ENCODE measurements at regions of chr11 and their contacts with region 1.

Region 1: GRCh38 chr11:112074026-112074811 is at the start of gene NKAPD1:
- DNase-seq: peak; percentile 75
- H3K4me3 Mint-ChIP-seq: peak within 1 kb of the TSS; percentile 94
- H3K27ac Mint-ChIP-seq: peak within 1 kb of the TSS; percentile 92
- H3K4me1 Mint-ChIP-seq: peaks cover 23% of the 10 kb centered on the region
- H3K27me3 Mint-ChIP-seq: peaks cover 8% of the 10 kb centered on the region
- total RNA-seq, gene NKAPD1: 24.6 and 25.0 TPM in 2 replicates

Region 2: DNA sequence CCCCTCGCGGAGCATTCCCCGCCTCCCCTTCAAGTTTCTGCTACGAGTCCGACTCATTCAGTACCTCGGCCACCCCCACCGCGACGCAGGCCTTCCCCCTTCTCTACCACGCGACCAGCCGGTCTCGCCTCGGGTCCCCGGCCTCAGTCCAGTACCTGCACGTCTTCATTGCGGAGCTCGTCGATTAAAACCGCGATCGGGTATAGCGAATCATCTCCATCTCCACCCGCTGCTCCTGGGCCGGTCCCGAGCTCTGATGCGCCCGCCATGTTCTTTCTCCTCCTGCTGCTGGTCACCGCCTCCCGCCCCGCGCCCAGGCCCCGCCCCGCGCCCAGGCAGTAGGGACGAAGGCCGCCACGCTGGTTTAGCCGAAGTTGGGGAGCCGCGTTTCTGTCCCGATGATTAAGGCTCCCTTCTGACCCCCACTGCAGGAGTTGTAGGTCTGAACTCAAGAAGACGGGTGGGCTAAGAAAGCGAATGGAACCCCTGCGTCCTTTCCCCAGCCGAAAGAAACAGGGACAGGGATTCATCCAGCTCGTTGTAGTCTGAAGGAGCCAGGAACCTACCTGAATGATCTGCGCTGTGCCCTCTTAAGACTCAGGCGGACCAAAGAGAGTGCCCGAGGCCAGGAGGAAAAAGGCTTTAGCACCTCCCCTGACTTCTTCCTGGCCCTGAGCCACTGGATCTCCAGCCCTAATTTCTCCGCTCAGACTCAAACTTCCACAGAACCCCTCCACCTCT is 308.0 kb before region 1 on chr11 and contains the start of gene PPP2R1B:
- intact Hi-C with region 1: loop called (anchors 5 kb)
- DNase-seq: peak; percentile 66
- H3K4me3 Mint-ChIP-seq: peak within 1 kb of the TSS; percentile 98
- H3K27ac Mint-ChIP-seq: peak within 1 kb of the TSS; percentile 98
- H3K4me1 Mint-ChIP-seq: peaks cover 26% of the 10 kb centered on the region
- H3K27me3 Mint-ChIP-seq: no peaks in the 10 kb centered on the region
- total RNA-seq, gene PPP2R1B: 57.7 and 64.2 TPM in 2 replicates

Region 3: GRCh38 chr11:111878849-111879636 is 195.2 kb before region 1 on chr11 and contains the starts of genes CFAP68 and FDXACB1:
- intact Hi-C with region 1: loop called (anchors 5 kb)
- DNase-seq: peak; percentile 94
- H3K4me3 Mint-ChIP-seq: peak within 1 kb of the TSS; percentile 96
- H3K27ac Mint-ChIP-seq: peak within 1 kb of the TSS; percentile 100
- H3K4me1 Mint-ChIP-seq: peaks cover 13% of the 10 kb centered on the region
- H3K27me3 Mint-ChIP-seq: no peaks in the 10 kb centered on the region
- total RNA-seq, gene CFAP68: 19.4 and 22.2 TPM in 2 replicates
- total RNA-seq, gene FDXACB1: 7.4 and 8.2 TPM in 2 replicates

Region 4: GRCh38 chr11:111938687-111939160 is 135.5 kb before region 1 on chr11:
- intact Hi-C with region 1: loop called (anchors 5 kb)
- DNase-seq: no peak
- H3K4me3 Mint-ChIP-seq: peak overlapping the region; percentile 89
- H3K27ac Mint-ChIP-seq: peak overlapping the region; percentile 95
- H3K4me1 Mint-ChIP-seq: peaks cover 60% of the 10 kb centered on the region
- H3K27me3 Mint-ChIP-seq: no peaks in the 10 kb centered on the region

Region 5: DNA sequence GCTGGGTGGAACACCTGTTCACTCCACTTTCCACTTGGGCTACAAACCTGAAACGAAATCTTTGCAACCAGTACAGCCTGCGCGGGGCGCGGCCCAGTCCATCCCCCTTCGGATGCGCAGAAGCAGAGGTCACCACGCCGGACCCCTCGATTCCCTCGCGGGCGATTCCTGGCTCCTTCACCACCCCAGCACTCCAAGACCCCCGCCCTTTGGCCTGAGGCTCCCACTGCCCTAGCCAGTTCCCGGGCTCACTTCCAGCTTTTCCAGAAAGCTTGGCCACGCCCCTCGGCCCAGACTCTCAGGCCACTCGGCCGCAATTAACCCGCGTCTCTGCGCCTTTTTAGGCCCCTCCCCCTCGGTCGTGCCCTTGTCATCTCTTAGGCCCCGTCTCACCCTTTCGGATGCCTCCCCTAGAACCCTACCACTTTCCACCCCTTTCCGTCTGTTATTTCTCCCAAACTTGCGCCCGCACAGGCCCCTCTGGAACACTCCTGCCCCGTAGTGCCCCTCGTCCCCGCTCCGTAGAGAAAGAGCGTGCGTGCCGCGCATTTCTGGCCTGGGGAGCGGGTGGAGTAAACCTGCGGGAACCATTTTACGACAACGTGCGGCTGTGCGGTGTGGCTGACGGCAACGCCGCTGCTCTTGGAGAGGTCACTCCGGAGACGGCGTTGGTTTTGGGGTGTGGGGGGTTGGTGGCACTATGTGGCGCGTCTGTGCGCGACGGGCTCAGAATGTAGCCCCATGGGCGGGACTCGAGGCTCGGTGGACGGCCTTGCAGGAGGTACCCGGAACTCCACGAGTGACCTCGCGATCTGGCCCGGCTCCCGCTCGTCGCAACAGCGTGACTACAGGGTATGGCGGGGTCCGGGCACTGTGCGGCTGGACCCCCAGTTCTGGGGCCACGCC is 49.2 kb before region 1 on chr11 and contains the start of gene DLAT:
- intact Hi-C with region 1: loop called (anchors 1 kb)
- DNase-seq: peak; percentile 86
- H3K4me3 Mint-ChIP-seq: peak within 1 kb of the TSS; percentile 99
- H3K27ac Mint-ChIP-seq: peak within 1 kb of the TSS; percentile 99
- H3K4me1 Mint-ChIP-seq: peaks cover 13% of the 10 kb centered on the region
- H3K27me3 Mint-ChIP-seq: no peaks in the 10 kb centered on the region
- total RNA-seq, gene DLAT: 47.2 and 47.3 TPM in 2 replicates

Region 6: DNA sequence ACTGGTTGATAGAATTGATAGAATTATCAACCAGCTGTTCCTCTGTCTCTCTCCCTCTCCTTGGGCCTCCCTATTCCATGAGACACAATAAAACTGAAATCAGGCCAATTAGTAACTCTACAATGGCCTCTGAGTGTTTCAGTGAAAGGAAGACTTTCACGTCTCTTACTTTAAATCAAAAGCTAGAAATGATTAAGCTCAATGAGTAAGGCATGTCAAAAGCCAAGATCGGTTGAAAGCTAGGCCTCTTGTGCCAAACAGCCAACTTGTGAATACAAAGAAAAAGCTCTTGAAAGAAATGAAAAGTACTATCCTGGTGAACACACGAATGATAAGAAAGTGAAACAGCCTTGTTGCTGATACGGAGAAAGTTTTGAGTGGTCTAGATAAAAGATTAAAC is 17.0 kb before region 1 on chr11:
- intact Hi-C with region 1: loop called (anchors 2 kb)
- DNase-seq: no peak
- H3K4me3 Mint-ChIP-seq: peak overlapping the region; percentile 11
- H3K27ac Mint-ChIP-seq: peak overlapping the region; percentile 80
- H3K4me1 Mint-ChIP-seq: peaks cover 21% of the 10 kb centered on the region
- H3K27me3 Mint-ChIP-seq: no peaks in the 10 kb centered on the region